CD14-positive monocyte (primary cell): ENCODE measurements at regions of chr10 and their contacts with region 1.

Region 1: DNA sequence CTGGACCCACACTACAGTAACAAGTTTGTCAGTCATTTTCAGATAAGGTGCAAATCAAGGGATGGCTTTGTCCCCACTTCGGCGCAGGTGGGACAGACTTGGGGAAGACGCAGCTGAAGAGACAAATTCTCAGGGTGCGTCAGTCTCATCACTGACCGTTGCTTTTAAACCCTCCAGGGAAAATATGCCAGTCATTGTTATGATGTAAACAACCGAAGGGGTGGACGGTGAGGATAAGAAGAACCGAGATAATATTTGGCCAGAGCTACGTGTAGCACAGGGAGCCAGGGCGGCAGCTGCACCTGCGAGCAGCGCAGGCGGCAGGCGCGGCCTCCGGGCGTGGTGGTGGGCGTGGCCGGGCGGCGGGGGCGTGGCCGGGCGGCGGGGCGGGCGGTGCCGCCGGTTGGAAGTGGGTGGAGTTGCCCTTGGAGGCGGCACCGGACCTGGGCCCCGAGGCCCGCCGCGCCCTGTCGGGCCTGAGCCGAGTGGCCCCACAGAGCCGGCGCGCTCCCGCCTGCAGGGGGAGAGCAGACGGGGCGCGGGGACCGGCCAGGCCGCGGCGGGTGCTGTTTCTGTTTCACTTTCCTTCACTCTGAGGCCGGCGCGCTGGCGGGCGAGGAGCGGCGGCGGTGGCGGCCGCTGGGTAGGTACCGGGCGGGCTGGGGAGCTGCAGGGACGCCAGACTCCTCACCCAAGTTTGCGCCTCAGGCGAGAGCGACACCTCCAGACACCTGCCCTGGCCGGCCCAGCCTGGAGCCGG is at the start of gene PCGF5:
- DNase-seq: peak; percentile 89 to 91 (median 90)
- H3K4me3 ChIP-seq: peak within 1 kb of the TSS; percentile 56 to 93 (median 77)
- H3K4me3 Mint-ChIP-seq: peak within 1 kb of the TSS; percentile 90 to 97
- H3K27ac ChIP-seq: peak within 1 kb of the TSS; percentile 71 to 96
- H3K27ac Mint-ChIP-seq: peak within 1 kb of the TSS; percentile 84 to 93 (median 90)
- H3K4me1 ChIP-seq: peaks cover 18 to 43% of the 10 kb centered on the region in 2 donors
- H3K4me1 Mint-ChIP-seq: peaks cover 43% of the 10 kb centered on the region
- H3K27me3 ChIP-seq: no peaks in the 10 kb centered on the region
- H3K27me3 Mint-ChIP-seq: peaks cover 0 to 5% (median 4%) of the 10 kb centered on the region in 3 donors
- CTCF ChIP-seq: peak; percentile 27
- polyA plus RNA-seq, gene PCGF5: 55.2 to 80.3 (median 58.7) TPM

Region 2: DNA sequence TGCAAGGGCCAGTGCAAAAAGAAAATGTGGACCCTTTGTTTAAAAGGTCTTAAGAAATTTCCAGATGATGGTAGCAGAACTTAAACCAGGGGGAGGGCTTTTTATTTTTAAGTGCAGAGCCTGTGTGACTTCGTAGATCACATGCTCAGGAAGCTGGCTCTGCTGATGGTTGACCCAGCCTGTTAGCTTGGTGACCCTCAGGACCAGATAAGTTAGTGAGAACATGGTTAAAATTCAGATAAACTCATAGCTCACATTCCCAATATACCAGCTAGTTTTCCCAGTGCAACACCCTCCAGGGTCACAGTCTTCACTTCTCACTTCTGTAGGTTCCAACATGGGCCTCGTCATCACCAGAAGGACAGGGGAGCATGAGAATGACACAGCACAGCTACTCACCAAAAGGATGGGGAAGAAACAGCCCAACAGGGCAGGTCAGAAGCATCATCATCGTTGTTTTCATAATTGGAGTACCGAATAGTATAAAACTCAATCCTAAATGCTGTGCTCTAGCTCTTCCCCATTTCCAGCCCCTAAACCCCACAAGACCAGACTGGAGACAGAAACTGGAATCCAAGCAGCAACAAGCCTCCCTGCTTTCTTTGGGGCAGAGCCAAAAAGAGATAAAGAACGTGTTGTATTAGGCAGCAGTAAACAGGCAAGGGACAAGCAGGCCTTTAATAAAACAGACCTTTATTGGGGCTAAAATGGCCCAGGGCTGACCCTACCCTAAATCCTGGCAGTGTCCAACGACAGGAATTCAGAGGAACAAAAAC is 197.3 kb before region 1 on chr10:
- intact Hi-C with region 1: no loop called
- DNase-seq: no peak
- H3K4me3 ChIP-seq: no peak overlapping the region
- H3K4me3 Mint-ChIP-seq: no peak overlapping the region
- H3K27ac ChIP-seq: no peak overlapping the region
- H3K27ac Mint-ChIP-seq: no peak overlapping the region
- H3K4me1 ChIP-seq: no peaks in the 10 kb centered on the region
- H3K4me1 Mint-ChIP-seq: no peaks in the 10 kb centered on the region
- H3K27me3 ChIP-seq: peaks cover 0 to 2% of the 10 kb centered on the region in 2 donors
- H3K27me3 Mint-ChIP-seq: peaks cover 3 to 6% (median 3%) of the 10 kb centered on the region in 3 donors
- CTCF ChIP-seq: no peak

Region 3: DNA sequence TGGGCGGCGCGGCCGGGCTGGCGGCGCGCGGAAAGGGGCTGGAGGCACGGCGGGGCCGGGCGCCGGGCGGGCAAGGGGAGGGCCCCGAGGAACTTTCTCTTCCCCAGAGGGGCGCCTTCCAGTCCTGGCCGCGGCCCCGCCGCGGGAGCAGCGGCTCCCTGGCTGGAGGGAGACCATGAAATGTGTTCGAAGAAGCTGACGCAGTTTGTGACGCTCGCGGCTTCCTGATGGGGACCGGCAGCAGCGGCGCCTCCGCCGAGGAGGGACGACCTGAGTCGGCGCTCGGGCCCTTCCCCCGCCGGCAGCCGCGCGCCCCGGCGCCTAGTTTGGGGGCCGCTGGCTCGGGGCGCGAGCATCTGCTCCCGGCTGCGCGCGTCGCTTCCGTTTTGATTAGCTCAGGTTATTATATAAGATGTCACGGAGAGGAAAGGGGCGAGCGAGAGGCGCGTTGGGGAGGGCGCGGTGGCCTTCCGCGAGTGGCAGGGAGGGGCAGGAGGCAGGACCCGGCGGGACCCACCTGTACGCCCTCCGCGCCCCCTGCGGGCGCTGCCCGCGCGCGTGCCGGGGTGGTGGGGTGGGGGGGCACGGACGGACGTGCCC is 57.0 kb before region 1 on chr10:
- intact Hi-C with region 1: loop called (anchors 2 kb)
- DNase-seq: peak; percentile 44 to 50 (median 48)
- H3K4me3 ChIP-seq: peak overlapping the region; percentile 52 to 80 (median 68)
- H3K4me3 Mint-ChIP-seq: peak overlapping the region; percentile 87 to 89
- H3K27ac ChIP-seq: peak overlapping the region in 1 of 2 donors; percentile 76
- H3K27ac Mint-ChIP-seq: peak overlapping the region in 6 of 7 donors; percentile 79 to 92 (median 90)
- H3K4me1 ChIP-seq: peaks cover 8 to 14% of the 10 kb centered on the region in 2 donors
- H3K4me1 Mint-ChIP-seq: peaks cover 18% of the 10 kb centered on the region
- H3K27me3 ChIP-seq: peaks cover 21 to 41% of the 10 kb centered on the region in 2 donors
- H3K27me3 Mint-ChIP-seq: peaks cover 31 to 43% (median 37%) of the 10 kb centered on the region in 3 donors
- CTCF ChIP-seq: no peak

Region 4: DNA sequence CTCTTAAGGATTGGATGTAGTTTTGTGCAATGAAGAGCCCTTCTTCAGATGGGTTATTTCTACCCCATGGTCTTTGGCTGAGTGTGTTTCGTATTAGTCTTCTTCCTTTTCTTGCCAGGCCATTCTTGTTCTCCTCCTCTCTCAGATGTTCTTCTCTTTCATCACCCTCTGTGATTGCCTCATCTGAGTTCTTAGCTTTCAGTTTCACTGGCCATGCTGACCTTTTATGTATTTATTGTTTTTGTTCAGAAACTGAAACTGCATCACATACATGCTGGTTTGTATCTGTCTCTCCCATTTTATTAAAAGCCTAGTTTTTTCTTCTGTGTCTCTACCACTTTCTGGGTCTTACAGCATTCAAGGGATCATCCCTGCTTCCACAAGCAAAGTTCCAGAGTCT is 21.6 kb before region 1 on chr10:
- intact Hi-C with region 1: loop called in 1 of 2 experiments (anchors 2 kb)
- DNase-seq: peak; percentile 81 to 88 (median 84)
- H3K4me3 ChIP-seq: peak overlapping the region in 2 of 3 experiments; percentile 22 to 53
- H3K4me3 Mint-ChIP-seq: peak overlapping the region; percentile 0 to 52
- H3K27ac ChIP-seq: peak overlapping the region; percentile 57 to 78
- H3K27ac Mint-ChIP-seq: peak overlapping the region; percentile 84 to 92 (median 89)
- H3K4me1 ChIP-seq: peaks cover 20 to 23% of the 10 kb centered on the region in 2 donors
- H3K4me1 Mint-ChIP-seq: peaks cover 37% of the 10 kb centered on the region
- H3K27me3 ChIP-seq: no peaks in the 10 kb centered on the region
- H3K27me3 Mint-ChIP-seq: peaks cover 0 to 2% (median 0%) of the 10 kb centered on the region in 3 donors
- CTCF ChIP-seq: no peak

Region 5: GRCh38 chr10:91316486-91316885 is 96.1 kb after region 1 on chr10:
- intact Hi-C with region 1: no loop called
- DNase-seq: no peak
- H3K4me3 ChIP-seq: no peak overlapping the region
- H3K4me3 Mint-ChIP-seq: no peak overlapping the region
- H3K27ac ChIP-seq: no peak overlapping the region
- H3K27ac Mint-ChIP-seq: no peak overlapping the region
- H3K4me1 ChIP-seq: no peaks in the 10 kb centered on the region
- H3K4me1 Mint-ChIP-seq: no peaks in the 10 kb centered on the region
- H3K27me3 ChIP-seq: no peaks in the 10 kb centered on the region
- H3K27me3 Mint-ChIP-seq: peaks cover 0 to 5% (median 2%) of the 10 kb centered on the region in 3 donors
- CTCF ChIP-seq: no peak